SK-N-SH (cell line): ENCODE measurements at regions of chr1 and their contacts with region 1.

Region 1: DNA sequence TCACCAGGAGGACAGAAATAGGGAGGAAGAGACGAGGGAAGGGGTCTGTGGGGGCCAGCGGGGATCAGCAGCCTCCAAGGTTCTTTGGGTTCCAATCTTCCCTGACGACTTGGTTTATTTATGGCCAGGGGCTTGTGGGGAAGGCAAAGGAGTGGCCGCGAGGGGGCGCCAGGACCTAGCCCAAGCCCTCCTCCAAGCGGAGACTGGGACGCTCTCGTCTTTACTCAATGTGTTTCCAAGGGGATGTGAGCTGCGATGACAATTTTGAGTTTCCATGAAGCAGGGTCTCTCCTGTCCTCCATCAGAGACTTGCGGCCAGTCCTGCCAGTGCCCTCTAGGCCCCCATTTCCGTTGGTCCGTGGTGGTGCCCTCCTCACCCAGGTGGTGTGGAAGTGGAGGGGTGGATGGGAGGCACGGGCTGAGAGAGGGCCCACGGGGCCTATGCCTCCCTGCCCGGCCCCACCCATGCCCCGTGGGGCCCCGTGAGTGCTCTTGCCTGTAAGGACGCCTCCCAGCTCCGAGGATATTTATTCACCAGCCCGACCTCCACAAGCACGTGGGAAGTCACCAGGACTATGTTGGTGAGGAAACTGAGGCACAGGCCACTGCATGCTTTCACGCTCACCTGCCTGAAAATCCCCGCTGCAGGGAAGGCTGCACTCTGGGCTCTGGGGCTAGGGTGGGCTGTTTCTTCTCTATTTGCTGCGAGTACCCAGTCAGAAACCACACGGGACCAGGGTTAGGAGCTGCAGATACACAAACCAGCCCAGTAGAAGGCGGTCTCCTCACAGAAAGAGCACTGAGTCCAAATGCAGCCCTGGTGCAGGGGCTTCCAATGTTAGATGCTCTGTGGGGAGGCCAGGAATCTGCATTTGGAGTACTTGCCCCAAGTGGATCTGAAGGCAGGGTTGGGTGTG is 26.5 kb downstream of the DMRTB1 start:
- DNase-seq: peak; percentile 92
- H3K4me3 ChIP-seq: peak overlapping the region in 1 of 2 experiments; percentile 38; a peak in 1 of 4 replicates
- H3K27ac ChIP-seq: no peak overlapping the region
- H3K4me1 ChIP-seq: peaks cover 0 to 19% of the 10 kb centered on the region in 2 experiments; a peak in 1 of 4 replicates
- H3K27me3 ChIP-seq: no peaks in the 10 kb centered on the region; the same call in 1 of the 2 replicates
- CTCF ChIP-seq: peak; percentile 93
- EP300 ChIP-seq: no peak
- RAD21 ChIP-seq: peak; percentile 98

Region 2: DNA sequence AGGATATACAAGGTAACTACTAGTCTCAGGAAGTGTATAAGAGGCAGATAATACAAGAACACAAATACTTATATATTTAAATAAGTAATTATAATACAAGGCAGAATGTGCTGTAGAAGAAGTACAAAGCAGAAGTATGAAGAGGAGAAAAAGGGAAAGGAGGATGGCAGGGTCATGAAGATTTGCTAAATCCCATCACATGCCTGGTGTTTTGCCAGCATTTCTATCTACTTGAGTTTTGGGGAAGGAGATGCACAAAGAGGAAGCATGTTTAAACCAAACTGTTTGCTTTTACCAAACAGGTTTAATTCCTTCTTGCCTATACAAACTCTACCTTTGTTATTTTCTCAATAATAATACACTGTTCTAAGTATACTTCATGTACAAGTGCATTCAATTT is 484.6 kb before region 1 on chr1:
- CTCF ChIA-PET with region 1: no interaction called
- POLR2A ChIA-PET with region 1: no interaction called
- DNase-seq: no peak
- H3K4me3 ChIP-seq: no peak overlapping the region
- H3K27ac ChIP-seq: no peak overlapping the region
- H3K4me1 ChIP-seq: no peaks in the 10 kb centered on the region
- H3K27me3 ChIP-seq: no peaks in the 10 kb centered on the region
- CTCF ChIP-seq: no peak
- EP300 ChIP-seq: no peak
- RAD21 ChIP-seq: no peak

Region 3: GRCh38 chr1:53406551-53407235 is 79.0 kb before region 1 on chr1:
- CTCF ChIA-PET with region 1: no interaction called
- POLR2A ChIA-PET with region 1: no interaction called
- DNase-seq: no peak
- H3K4me3 ChIP-seq: no peak overlapping the region
- H3K27ac ChIP-seq: no peak overlapping the region
- H3K4me1 ChIP-seq: peaks cover 17% of the 10 kb centered on the region in 2 experiments; a peak in 3 of 4 replicates
- H3K27me3 ChIP-seq: no peaks in the 10 kb centered on the region; the same call in 1 of the 2 replicates
- CTCF ChIP-seq: no peak
- EP300 ChIP-seq: no peak
- RAD21 ChIP-seq: no peak

Region 4: DNA sequence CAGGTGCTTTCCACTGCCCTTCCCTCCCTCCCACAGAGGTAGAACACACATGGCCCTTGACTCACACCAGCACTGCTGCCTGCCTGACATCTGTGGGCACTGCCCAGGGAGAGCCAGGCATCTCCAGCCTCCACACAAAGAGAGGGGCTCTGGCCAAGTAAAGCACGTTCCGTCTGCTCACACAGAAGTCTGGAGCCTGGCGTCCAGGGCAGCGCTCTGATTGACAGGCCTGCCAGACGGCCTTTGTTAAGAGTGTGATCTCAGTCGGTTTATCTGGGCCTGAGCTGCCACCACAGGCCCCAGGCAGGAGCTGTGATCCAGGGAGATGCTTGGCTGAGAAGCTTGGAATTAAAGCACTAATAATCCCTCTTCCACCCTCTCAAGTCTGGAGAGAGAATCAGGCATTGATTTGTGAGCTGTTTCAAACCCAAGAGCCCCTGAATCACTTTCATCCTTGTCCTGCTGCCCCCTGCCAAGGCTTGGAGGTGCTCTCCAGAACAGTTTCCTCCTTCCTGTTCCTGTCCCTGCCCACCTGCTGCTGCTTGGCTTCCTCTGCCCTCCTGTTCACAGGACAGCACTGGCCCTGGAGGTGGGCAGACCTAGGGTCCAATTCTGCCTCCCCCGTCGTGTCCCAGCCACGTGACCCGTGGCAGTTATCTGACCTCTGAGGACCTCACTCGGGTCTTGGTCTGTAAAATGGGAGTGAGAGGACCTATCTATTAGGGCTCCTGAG is 22.8 kb before region 1 on chr1:
- CTCF ChIA-PET with region 1: interaction called, 11 read pairs
- POLR2A ChIA-PET with region 1: no interaction called
- DNase-seq: peak; percentile 81
- H3K4me3 ChIP-seq: no peak overlapping the region
- H3K27ac ChIP-seq: peak overlapping the region in 1 of 2 experiments; percentile 76; a peak in 2 of 4 replicates
- H3K4me1 ChIP-seq: peaks cover 0 to 18% of the 10 kb centered on the region in 2 experiments; a peak in 1 of 4 replicates
- H3K27me3 ChIP-seq: no peaks in the 10 kb centered on the region
- CTCF ChIP-seq: no peak
- EP300 ChIP-seq: peak in 1 of 2 experiments; percentile 36; a peak in 1 of 4 replicates
- RAD21 ChIP-seq: no peak

Region 5: DNA sequence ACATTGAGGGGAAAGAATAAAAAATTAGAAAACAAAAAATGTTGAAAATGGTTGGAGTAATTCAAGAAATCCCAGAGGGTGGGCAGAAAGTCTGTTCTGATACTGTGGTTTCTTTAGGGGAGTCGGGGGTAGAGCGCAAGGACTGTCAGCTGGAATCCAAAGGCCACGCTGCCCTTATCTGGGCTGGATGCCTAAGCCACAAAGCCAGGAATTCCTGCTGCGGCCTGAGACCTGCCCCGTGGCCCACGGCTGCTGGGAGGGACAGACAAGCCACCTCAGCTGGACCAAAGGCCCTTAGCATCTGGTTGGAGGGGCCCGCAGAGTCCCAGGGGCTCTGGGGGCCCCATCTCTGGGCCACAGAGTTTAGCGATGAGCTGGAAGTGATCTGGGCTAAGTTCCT is 33.7 kb after region 1 on chr1:
- CTCF ChIA-PET with region 1: interaction called, 21 read pairs
- POLR2A ChIA-PET with region 1: no interaction called
- DNase-seq: no peak
- H3K4me3 ChIP-seq: no peak overlapping the region
- H3K27ac ChIP-seq: no peak overlapping the region; a peak in 1 of 4 replicates
- H3K4me1 ChIP-seq: peaks cover 0 to 59% of the 10 kb centered on the region in 2 experiments; a peak in 1 of 4 replicates
- H3K27me3 ChIP-seq: no peaks in the 10 kb centered on the region
- CTCF ChIP-seq: no peak
- EP300 ChIP-seq: no peak
- RAD21 ChIP-seq: no peak

Region 6: GRCh38 chr1:53625049-53625448 is 139.3 kb after region 1 on chr1:
- CTCF ChIA-PET with region 1: interaction called, 11 read pairs
- POLR2A ChIA-PET with region 1: no interaction called
- DNase-seq: no peak
- H3K4me3 ChIP-seq: no peak overlapping the region
- H3K27ac ChIP-seq: no peak overlapping the region
- H3K4me1 ChIP-seq: peaks cover 0 to 27% of the 10 kb centered on the region in 2 experiments; a peak in 1 of 4 replicates
- H3K27me3 ChIP-seq: no peaks in the 10 kb centered on the region; the same call in 1 of the 2 replicates
- CTCF ChIP-seq: no peak
- EP300 ChIP-seq: no peak
- RAD21 ChIP-seq: no peak

Region 7: DNA sequence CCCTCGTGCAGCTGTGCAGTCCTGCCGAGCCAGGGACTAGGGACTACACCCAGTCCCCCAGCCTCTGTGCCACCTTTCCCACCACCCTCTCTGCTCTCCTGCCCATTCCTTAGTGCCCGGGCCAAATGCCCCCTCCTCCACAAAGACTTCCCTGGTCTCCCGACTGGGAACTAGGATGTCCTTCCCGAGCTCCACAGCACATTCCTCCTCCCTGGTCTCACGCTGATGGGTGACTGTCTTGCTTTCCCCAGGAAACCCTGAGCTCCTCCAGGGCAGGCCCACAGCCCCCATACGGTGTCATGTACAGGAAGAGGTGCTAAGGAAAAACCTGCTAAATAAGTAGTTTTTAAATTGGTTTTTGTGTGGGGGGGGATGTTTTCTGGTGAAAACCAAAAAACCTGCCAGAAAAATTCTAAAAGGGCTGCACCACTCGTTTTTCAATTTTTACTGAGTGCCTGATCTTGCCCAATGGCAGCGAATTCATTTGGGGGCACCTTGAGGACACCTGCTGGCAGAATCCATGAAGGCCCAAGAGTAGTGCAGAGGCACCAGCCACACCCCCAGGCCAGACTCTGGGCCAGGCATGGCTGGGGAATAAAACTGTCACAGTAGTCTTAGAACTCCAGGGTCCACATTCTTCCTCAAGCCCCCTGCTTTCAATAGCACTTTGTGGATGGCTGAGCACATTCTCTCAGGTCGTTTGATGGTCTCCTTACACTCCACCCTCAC is 202.8 kb after region 1 on chr1:
- CTCF ChIA-PET with region 1: interaction called, 131 read pairs
- POLR2A ChIA-PET with region 1: no interaction called
- DNase-seq: no peak
- H3K4me3 ChIP-seq: no peak overlapping the region
- H3K27ac ChIP-seq: no peak overlapping the region
- H3K4me1 ChIP-seq: peaks cover 15 to 56% of the 10 kb centered on the region in 2 experiments; a peak in 1 of 4 replicates
- H3K27me3 ChIP-seq: no peaks in the 10 kb centered on the region
- CTCF ChIP-seq: peak; percentile 19; the same call in 1 of the 2 replicates
- EP300 ChIP-seq: no peak
- RAD21 ChIP-seq: peak; percentile 54

Region 8: DNA sequence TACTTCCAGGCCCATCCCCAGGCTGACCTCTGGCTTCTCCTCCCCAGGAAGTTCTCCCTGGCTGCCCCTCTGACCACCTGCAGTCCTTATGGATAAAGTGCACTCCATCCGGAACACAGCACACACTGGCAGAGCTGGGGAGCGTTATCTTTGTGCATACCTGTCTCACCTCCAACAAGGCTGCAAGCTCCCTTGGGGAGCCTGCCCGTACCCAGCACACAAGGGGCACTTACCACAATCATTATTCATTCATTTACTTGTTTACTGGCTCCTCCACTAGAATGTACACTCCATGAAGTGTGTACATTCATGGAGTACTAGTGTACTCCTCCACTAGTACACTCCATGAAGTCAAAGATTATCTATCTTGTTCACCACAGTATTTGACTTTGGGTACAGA is 223.0 kb after region 1 on chr1:
- CTCF ChIA-PET with region 1: no interaction called
- POLR2A ChIA-PET with region 1: no interaction called
- DNase-seq: no peak
- H3K4me3 ChIP-seq: no peak overlapping the region
- H3K27ac ChIP-seq: no peak overlapping the region
- H3K4me1 ChIP-seq: no peaks in the 10 kb centered on the region; a peak in 1 of 4 replicates
- H3K27me3 ChIP-seq: no peaks in the 10 kb centered on the region; the same call in 1 of the 2 replicates
- CTCF ChIP-seq: no peak
- EP300 ChIP-seq: no peak
- RAD21 ChIP-seq: no peak

Region 9: GRCh38 chr1:53747841-53748240 is 262.1 kb after region 1 on chr1:
- CTCF ChIA-PET with region 1: interaction called, 76 read pairs
- POLR2A ChIA-PET with region 1: no interaction called
- DNase-seq: no peak
- H3K4me3 ChIP-seq: no peak overlapping the region
- H3K27ac ChIP-seq: no peak overlapping the region
- H3K4me1 ChIP-seq: no peaks in the 10 kb centered on the region
- H3K27me3 ChIP-seq: peaks cover 9% of the 10 kb centered on the region; the same call in 1 of the 2 replicates
- CTCF ChIP-seq: no peak
- EP300 ChIP-seq: no peak
- RAD21 ChIP-seq: no peak

Region 10: DNA sequence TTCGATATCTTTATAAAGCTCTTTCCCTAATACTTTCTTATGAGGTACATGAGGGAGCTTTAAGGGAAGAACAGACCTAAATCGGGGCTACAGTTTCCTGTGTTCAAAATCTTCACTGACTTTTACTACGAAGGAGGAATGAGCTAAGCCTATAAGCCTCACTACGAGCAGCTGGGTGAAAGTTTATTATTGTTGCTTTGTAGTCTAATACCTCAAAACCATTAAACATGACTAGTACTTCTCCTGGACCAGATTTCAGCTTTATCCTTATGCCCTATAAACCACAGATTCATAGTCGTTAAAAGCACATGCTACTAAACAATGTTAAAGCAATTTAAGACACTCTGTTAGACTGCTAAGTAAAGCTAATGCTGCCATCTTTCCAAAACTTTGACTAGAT is 322.2 kb after region 1 on chr1:
- CTCF ChIA-PET with region 1: no interaction called
- POLR2A ChIA-PET with region 1: no interaction called
- DNase-seq: no peak
- H3K4me3 ChIP-seq: no peak overlapping the region
- H3K27ac ChIP-seq: no peak overlapping the region
- H3K4me1 ChIP-seq: no peaks in the 10 kb centered on the region
- H3K27me3 ChIP-seq: no peaks in the 10 kb centered on the region
- CTCF ChIP-seq: no peak
- EP300 ChIP-seq: no peak
- RAD21 ChIP-seq: no peak